ENCODE measurements at regions of chr5 and their contacts with region 1.

Region 1: GRCh38 chr5:144873076-144873475 is 702.4 kb downstream of the KCTD16 start:
- DNase-seq: no peak
- H3K4me3 ChIP-seq: no peak overlapping the region
- H3K27ac ChIP-seq: no peak overlapping the region
- H3K4me1 ChIP-seq: peaks cover 0 to 6% (median 0%) of the 10 kb centered on the region in 4 donors
- H3K27me3 ChIP-seq: no peaks in the 10 kb centered on the region
- CTCF ChIP-seq: no peak
- EP300 ChIP-seq: no peak
- POLR2A ChIP-seq: no peak

Region 2: DNA sequence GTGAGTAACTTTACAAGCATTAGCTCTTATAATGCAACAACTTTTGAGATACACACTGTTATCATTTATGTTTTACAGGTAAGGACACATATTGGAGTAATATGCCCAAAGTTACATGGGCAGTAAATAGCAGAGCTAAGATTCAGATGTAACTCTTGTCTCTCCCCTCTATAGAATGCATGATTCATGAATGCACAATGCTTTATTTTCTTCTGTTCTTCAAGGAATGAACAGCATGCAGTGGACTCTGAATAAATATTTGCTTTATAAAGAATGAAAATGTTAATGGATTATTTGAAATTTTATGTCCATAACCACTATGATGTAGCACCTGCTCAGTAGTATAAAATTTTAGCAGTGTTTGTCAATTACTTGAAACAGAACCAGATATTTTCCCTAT is 72.9 kb before region 1 on chr5:
- in situ Hi-C with region 1: no loop called
- intact Hi-C with region 1: loop called (anchors 2 kb)
- DNase-seq: no peak
- H3K4me3 ChIP-seq: no peak overlapping the region
- H3K27ac ChIP-seq: no peak overlapping the region
- H3K4me1 ChIP-seq: no peaks in the 10 kb centered on the region
- H3K27me3 ChIP-seq: no peaks in the 10 kb centered on the region
- CTCF ChIP-seq: no peak
- EP300 ChIP-seq: no peak
- POLR2A ChIP-seq: no peak

Measured in transverse colon (tissue), 4 donors.